H1 (cell line): ENCODE measurements at regions of chr5 and their contacts with region 1.

Region 1: GRCh38 chr5:116557669-116558271 is 16.9 kb downstream of the SEMA6A start:
- DNase-seq: no peak
- H3K4me3 ChIP-seq: no peak overlapping the region
- H3K27ac ChIP-seq: no peak overlapping the region
- H3K4me1 ChIP-seq: peaks cover 13 to 35% (median 27%) of the 10 kb centered on the region in 4 experiments
- H3K27me3 ChIP-seq: no peaks in the 10 kb centered on the region
- CTCF ChIP-seq: peak in 2 of 3 experiments; percentile 46 to 61; a peak in 3 of 4 replicates
- EP300 ChIP-seq: no peak
- POLR2A ChIP-seq: no peak
- RAD21 ChIP-seq: peak; percentile 59 to 60

Region 2: DNA sequence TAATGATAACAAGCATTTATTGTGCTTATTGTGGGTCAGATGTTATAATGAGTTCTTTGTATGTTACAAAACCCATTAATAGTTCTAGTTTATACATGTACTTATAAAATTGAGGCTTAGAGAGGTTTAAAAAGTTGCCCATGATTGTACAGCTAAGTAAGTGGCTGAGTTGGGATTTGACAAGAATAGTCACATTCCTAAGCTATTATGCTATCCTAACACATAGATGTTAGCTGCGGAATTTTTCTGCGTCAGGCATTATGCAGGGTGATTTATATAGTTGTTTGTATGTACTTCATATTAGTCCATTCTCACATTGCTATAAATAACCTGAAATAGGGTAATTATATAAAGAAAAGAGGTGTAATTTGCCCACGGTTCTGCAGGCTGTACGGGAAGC is 460.5 kb before region 1 on chr5:
- CTCF ChIA-PET with region 1: no interaction called
- POLR2A ChIA-PET with region 1: no interaction called
- DNase-seq: no peak
- H3K4me3 ChIP-seq: no peak overlapping the region
- H3K27ac ChIP-seq: no peak overlapping the region
- H3K4me1 ChIP-seq: no peaks in the 10 kb centered on the region
- H3K27me3 ChIP-seq: no peaks in the 10 kb centered on the region
- CTCF ChIP-seq: no peak
- EP300 ChIP-seq: no peak
- POLR2A ChIP-seq: no peak
- RAD21 ChIP-seq: no peak

Region 3: DNA sequence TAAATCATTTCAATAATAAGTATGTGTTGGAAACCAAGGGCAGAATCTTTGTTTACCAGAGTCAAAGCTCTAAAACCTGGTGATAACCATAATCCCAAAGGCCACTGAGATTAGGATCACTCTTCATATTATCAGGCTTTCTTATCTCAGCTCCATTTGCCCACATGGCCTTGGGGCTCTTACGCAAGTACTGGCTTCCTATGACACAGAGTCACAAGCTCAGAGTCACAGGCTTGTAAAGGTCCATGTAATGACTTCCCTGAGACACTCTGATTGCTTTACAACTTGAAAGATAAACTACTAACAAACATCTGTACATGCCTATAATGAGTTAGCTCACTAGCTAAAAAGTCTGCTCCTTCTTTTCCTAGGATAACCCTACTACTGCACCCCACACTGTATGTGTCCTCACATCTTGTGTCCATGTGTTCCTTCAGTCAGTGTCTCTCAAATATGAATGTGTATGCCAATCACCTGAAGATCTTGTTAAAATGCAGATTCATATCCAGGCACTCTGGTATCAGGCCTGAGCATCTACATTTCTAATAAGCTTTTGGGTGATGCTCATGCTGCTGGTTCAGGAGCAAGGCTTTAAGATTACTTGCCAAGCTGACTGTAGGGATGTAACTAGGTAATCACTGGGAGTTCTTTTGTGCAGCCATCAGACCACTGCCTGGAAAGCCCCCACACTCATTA is 11.6 kb before region 1 on chr5:
- CTCF ChIA-PET with region 1: interaction called, 14 read pairs
- POLR2A ChIA-PET with region 1: interaction called, 10 read pairs
- DNase-seq: no peak
- H3K4me3 ChIP-seq: no peak overlapping the region
- H3K27ac ChIP-seq: no peak overlapping the region
- H3K4me1 ChIP-seq: peaks cover 0 to 8% (median 6%) of the 10 kb centered on the region in 4 experiments; a peak in 4 of 7 replicates
- H3K27me3 ChIP-seq: no peaks in the 10 kb centered on the region
- CTCF ChIP-seq: no peak
- EP300 ChIP-seq: no peak
- POLR2A ChIP-seq: no peak; a peak in 1 of 3 replicates
- RAD21 ChIP-seq: no peak